ENCODE measurements at regions of chr19 and their contacts with region 1.

Region 1: GRCh38 chr19:41479757-41480191 is 36.8 kb downstream of the ERICH4 start:
- DNase-seq: no peak
- H3K4me3 ChIP-seq: no peak overlapping the region
- H3K27ac ChIP-seq: peak overlapping the region in 2 of 4 donors; percentile 21
- H3K4me1 ChIP-seq: no peaks in the 10 kb centered on the region
- H3K27me3 ChIP-seq: peaks cover 18% of the 10 kb centered on the region
- CTCF ChIP-seq: no peak
- EP300 ChIP-seq: no peak
- POLR2A ChIP-seq: no peak

Region 2: DNA sequence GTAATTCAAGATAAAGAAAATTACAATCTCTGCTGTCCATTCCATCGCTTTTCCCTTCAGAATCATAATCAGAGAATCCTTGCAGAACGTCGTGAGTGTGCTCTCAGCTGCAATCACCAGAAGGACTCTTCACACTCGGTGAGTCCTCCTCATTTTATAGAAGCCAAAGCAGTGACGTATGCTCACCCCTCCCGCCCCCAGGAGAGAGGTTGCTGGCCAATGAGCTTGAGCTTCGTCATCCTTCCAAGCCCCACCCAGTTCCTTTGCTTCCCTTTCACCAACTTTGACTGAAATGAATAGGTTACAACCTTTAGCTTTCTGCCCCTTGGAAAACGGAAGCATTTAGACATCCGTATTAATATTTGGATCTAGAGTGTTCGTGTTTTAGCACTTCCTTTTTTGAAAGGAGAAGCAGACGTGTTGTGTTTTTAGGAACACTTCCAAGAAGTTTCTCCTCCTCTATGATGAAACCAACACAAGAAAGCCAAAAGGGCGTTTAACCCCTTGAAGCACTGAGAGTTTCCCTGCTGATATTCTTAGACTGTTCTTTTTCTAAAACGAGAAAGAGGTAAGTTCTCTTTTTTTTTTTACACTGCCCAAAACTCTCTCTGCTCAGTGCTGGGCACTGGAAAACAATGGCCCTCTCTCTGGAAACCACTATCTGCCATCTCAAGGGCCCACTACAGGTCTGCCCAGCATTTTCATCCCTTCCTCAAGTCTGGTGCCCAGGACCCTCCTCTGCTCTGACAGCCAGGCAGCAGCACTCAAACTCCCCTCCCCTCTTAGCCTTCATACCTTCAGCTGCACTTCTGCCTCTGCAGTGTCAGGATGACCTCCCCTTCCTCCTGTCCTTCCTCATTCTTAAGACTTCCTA is 51.9 kb after region 1 on chr19:
- in situ Hi-C with region 1: no loop called
- intact Hi-C with region 1: loop called (anchors 2 kb)
- DNase-seq: peak; percentile 74
- H3K4me3 ChIP-seq: peak overlapping the region in 1 of 4 donors; percentile 19
- H3K27ac ChIP-seq: peak overlapping the region; percentile 51 to 74 (median 61)
- H3K4me1 ChIP-seq: peaks cover 0 to 27% (median 2%) of the 10 kb centered on the region in 4 donors
- H3K27me3 ChIP-seq: peaks cover 31% of the 10 kb centered on the region
- CTCF ChIP-seq: no peak
- EP300 ChIP-seq: no peak
- POLR2A ChIP-seq: peak; percentile 80

Region 3: GRCh38 chr19:41844601-41845000 is 364.8 kb after region 1 on chr19 and contains the start of gene LYPD4:
- in situ Hi-C with region 1: loop called in 1 of 4 experiments (anchors 25 kb)
- intact Hi-C with region 1: no loop called
- DNase-seq: no peak
- H3K4me3 ChIP-seq: no peak within 1 kb of the TSS
- H3K27ac ChIP-seq: no peak within 1 kb of the TSS
- H3K4me1 ChIP-seq: no peaks in the 10 kb centered on the region
- H3K27me3 ChIP-seq: peaks cover 20% of the 10 kb centered on the region
- CTCF ChIP-seq: no peak
- EP300 ChIP-seq: no peak
- POLR2A ChIP-seq: no peak
- total RNA-seq, gene LYPD4: not detected